ENCODE measurements at regions of chr22 and their contacts with region 1.

Region 1: GRCh38 chr22:42820066-42820763 is 36.9 kb downstream of the ARFGAP3 start:
- DNase-seq: peak; percentile 93
- ATAC-seq: peak; percentile 80
- H3K4me3 ChIP-seq: no peak overlapping the region
- H3K27ac ChIP-seq: no peak overlapping the region
- H3K4me1 ChIP-seq: peaks cover 10% of the 10 kb centered on the region
- H3K27me3 ChIP-seq: no peaks in the 10 kb centered on the region
- CTCF ChIP-seq: peak; percentile 86
- POLR2A ChIP-seq: no peak
- RAD21 ChIP-seq: peak; percentile 79

Region 2: GRCh38 chr22:42614312-42615091 is 205.7 kb before region 1 on chr22 and contains the start of gene POLDIP3:
- CTCF ChIA-PET with region 1: no interaction called
- POLR2A ChIA-PET with region 1: interaction called, 6 read pairs
- dilution Hi-C with region 1: no loop called
- in situ Hi-C with region 1: no loop called
- intact Hi-C with region 1: loop called (anchors 1 kb)
- DNase-seq: peak; percentile 98
- ATAC-seq: peak; percentile 74
- H3K4me3 ChIP-seq: peak within 1 kb of the TSS; percentile 75
- H3K27ac ChIP-seq: peak within 1 kb of the TSS; percentile 99
- H3K4me1 ChIP-seq: peaks cover 20% of the 10 kb centered on the region
- H3K27me3 ChIP-seq: no peaks in the 10 kb centered on the region
- CTCF ChIP-seq: peak; percentile 34
- POLR2A ChIP-seq: no peak; the same call in none of the 2 replicates
- RAD21 ChIP-seq: no peak
- total RNA-seq, gene POLDIP3: 28.1 and 33.9 TPM in 2 replicates

Region 3: DNA sequence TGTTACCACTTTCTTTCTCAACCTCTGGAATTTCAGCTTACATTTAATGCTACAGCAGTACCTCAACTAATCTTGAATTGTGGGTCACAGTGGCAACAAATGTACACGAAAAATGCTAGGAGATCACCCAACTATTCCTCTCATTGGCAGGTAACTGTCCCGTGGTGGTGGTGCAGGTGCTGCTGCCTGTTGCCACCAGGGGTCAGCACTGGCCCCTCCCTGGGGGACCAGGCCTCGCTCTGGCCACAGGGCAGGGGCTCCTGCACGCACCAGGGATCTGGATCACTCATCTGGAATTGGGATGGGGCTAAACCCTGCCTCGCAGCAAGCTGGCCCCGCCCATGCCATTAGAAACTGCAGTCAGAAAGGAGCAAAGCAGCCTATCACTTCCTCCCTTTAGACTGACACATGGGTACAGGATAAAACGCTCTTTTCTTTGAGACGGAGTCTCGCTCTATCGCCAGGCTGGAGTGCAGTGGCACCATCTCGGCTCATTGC is 198.7 kb before region 1 on chr22:
- CTCF ChIA-PET with region 1: interaction called, 4 read pairs
- POLR2A ChIA-PET with region 1: no interaction called
- dilution Hi-C with region 1: no loop called
- in situ Hi-C with region 1: no loop called
- intact Hi-C with region 1: loop called (anchors 1 kb)
- DNase-seq: peak; percentile 61
- ATAC-seq: peak; percentile 82
- H3K4me3 ChIP-seq: no peak overlapping the region
- H3K27ac ChIP-seq: no peak overlapping the region
- H3K4me1 ChIP-seq: peaks cover 9% of the 10 kb centered on the region
- H3K27me3 ChIP-seq: no peaks in the 10 kb centered on the region
- CTCF ChIP-seq: peak; percentile 82
- POLR2A ChIP-seq: no peak
- RAD21 ChIP-seq: peak; percentile 79

Region 4: GRCh38 chr22:42649246-42650099 is 170.7 kb before region 1 on chr22 and contains the start of gene CYB5R3:
- CTCF ChIA-PET with region 1: no interaction called
- POLR2A ChIA-PET with region 1: no interaction called
- dilution Hi-C with region 1: no loop called
- in situ Hi-C with region 1: loop called (anchors 5 kb)
- intact Hi-C with region 1: no loop called
- DNase-seq: peak; percentile 73
- ATAC-seq: peak; percentile 92
- H3K4me3 ChIP-seq: peak within 1 kb of the TSS; percentile 85
- H3K27ac ChIP-seq: peak within 1 kb of the TSS; percentile 85
- H3K4me1 ChIP-seq: peaks cover 39% of the 10 kb centered on the region
- H3K27me3 ChIP-seq: no peaks in the 10 kb centered on the region
- CTCF ChIP-seq: no peak
- POLR2A ChIP-seq: no peak
- RAD21 ChIP-seq: no peak
- total RNA-seq, gene CYB5R3: 37.5 and 44.1 TPM in 2 replicates

Region 5: GRCh38 chr22:42662114-42663021 is 157.8 kb before region 1 on chr22:
- CTCF ChIA-PET with region 1: interaction called, 8 read pairs
- POLR2A ChIA-PET with region 1: no interaction called
- dilution Hi-C with region 1: no loop called
- in situ Hi-C with region 1: no loop called
- intact Hi-C with region 1: loop called (anchors 1 kb)
- DNase-seq: peak; percentile 53
- ATAC-seq: peak; percentile 95
- H3K4me3 ChIP-seq: peak overlapping the region; percentile 63
- H3K27ac ChIP-seq: peak overlapping the region; percentile 26; the same call in 1 of the 2 replicates
- H3K4me1 ChIP-seq: no peaks in the 10 kb centered on the region
- H3K27me3 ChIP-seq: no peaks in the 10 kb centered on the region
- CTCF ChIP-seq: peak; percentile 87
- POLR2A ChIP-seq: peak; percentile 63
- RAD21 ChIP-seq: peak; percentile 90

Region 6: DNA sequence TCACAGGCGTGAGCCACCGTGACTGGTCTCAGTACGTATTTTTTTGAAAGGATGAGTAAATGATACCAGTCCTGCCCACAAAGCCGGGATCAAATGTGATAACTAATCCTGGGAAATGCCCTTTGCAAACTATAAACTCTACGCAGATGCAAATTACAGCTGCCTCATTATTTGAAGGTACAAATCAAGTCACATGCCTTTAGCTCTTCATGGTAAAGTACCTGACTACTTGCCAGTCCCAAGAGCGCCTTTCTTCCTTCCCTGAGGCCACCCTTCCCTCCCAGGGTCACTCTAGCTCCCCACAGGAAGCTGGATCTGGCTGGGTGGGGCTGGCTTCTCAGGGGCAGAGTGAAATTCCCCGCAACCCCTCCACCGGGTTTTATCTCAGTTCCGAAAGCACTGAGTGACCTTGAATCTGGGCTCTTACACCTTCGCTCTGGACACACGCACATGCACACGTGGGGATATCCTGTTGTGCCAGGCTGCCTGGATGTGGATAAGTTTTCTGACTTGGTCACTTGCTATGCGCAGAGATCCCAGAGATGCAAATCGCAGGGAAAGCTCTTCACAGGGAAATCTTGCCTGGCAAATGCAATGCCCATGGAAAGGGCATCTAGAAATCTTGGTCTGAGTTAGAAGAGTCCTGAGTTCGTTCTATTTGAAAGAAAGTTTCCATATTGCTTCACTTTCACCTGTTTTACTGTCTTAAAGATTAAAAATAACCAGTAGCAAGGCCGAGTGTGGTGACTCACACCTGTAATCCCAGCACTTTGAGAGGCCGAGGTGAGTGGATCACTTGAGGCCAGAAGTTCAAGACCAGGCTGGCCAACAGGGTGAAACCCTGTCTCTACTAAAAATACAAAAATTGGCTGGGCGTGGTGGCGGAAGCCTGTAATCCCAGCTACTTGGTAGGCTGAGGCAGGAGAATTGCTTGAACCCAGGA is 108.0 kb before region 1 on chr22:
- CTCF ChIA-PET with region 1: no interaction called
- POLR2A ChIA-PET with region 1: no interaction called
- dilution Hi-C with region 1: no loop called
- in situ Hi-C with region 1: no loop called
- intact Hi-C with region 1: no loop called
- DNase-seq: no peak
- ATAC-seq: no peak
- H3K4me3 ChIP-seq: no peak overlapping the region
- H3K27ac ChIP-seq: no peak overlapping the region
- H3K4me1 ChIP-seq: peaks cover 6% of the 10 kb centered on the region
- H3K27me3 ChIP-seq: no peaks in the 10 kb centered on the region
- CTCF ChIP-seq: no peak
- POLR2A ChIP-seq: no peak
- RAD21 ChIP-seq: no peak

Region 7: DNA sequence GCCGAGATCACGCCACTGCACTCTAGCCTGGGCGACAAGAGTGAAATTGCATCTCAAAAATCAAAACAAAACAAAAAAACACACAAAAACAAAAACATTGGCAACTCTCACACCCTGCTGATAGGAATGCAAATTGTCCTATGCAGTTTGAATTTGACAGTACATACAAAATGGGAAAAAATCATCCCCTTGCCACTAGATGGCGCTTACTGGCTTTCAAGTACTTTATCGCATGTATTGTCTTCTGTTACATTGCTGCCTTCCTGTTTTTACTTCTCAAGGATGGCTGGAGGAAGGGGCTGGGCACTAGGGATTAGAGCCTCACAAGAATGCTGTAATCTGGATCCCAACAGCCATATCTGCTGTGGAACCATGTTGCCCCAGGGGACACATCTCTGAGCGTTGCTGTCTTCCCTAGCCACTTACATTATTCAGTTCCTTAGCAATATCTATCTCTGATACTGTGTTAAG is 40.1 kb before region 1 on chr22:
- CTCF ChIA-PET with region 1: interaction called, 3 read pairs
- POLR2A ChIA-PET with region 1: no interaction called
- dilution Hi-C with region 1: no loop called
- in situ Hi-C with region 1: no loop called
- intact Hi-C with region 1: loop called (anchors 1 kb)
- DNase-seq: peak; percentile 95
- ATAC-seq: peak; percentile 83
- H3K4me3 ChIP-seq: no peak overlapping the region
- H3K27ac ChIP-seq: peak overlapping the region; percentile 36; the same call in 1 of the 2 replicates
- H3K4me1 ChIP-seq: peaks cover 4% of the 10 kb centered on the region
- H3K27me3 ChIP-seq: no peaks in the 10 kb centered on the region
- CTCF ChIP-seq: peak; percentile 98
- POLR2A ChIP-seq: no peak
- RAD21 ChIP-seq: peak; percentile 82